Naive thymus-derived CD4-positive, alpha-beta T cell (primary cell): ENCODE measurements at regions of chr3 and their contacts with region 1.

Region 1: DNA sequence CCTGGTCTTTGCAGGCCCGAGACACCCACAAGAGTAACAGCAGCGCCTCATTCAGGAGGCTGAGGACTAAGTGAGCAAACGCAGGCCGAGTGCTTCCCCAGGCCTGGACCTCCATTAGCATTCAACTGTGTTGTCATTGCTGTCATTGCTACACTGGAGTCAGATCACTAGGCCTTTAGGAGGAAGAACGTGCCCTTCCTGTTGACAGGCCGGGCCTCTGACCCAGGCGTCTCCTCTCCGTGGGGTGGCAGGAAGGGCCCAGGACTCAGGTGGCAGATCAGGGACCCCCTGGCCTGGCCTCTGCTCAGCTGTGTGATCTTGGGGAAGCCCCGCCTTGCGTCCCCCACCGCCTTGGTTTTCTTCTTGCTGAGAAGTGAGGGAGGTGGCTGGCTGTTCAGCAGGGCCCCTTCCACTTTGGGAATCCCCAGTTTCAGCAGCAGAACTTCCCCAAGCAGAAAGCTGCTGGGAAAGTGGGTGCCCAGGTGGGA is 19.1 kb downstream of the ZDHHC19 start:
- DNase-seq: peak in 4 of 9 donors; percentile 27 to 57 (median 35)
- ATAC-seq: peak; percentile 64
- H3K4me3 ChIP-seq: no peak overlapping the region
- H3K4me3 Mint-ChIP-seq: peak overlapping the region in 7 of 10 donors; percentile 25 to 73 (median 49)
- H3K27ac ChIP-seq: peak overlapping the region; percentile 63
- H3K27ac Mint-ChIP-seq: peak overlapping the region; percentile 61 to 98 (median 87)
- H3K4me1 ChIP-seq: peaks cover 9 to 29% of the 10 kb centered on the region in 2 donors
- H3K4me1 Mint-ChIP-seq: peaks cover 14 to 41% (median 16%) of the 10 kb centered on the region in 7 donors
- H3K27me3 ChIP-seq: no peaks in the 10 kb centered on the region
- H3K27me3 Mint-ChIP-seq: no peaks in the 10 kb centered on the region

Region 2: GRCh38 chr3:195863121-195864006 is 328.7 kb before region 1 on chr3:
- CTCF ChIA-PET with region 1: no interaction called
- POLR2A ChIA-PET with region 1: no interaction called
- intact Hi-C with region 1: loop called (anchors 2 to 10 kb)
- DNase-seq: peak; percentile 29 to 73 (median 50)
- ATAC-seq: peak; percentile 91
- H3K4me3 ChIP-seq: no peak overlapping the region
- H3K4me3 Mint-ChIP-seq: no peak overlapping the region
- H3K27ac ChIP-seq: no peak overlapping the region
- H3K27ac Mint-ChIP-seq: peak overlapping the region in 2 of 9 donors; percentile 62 to 77
- H3K4me1 ChIP-seq: no peaks in the 10 kb centered on the region
- H3K4me1 Mint-ChIP-seq: peaks cover 3 to 15% (median 7%) of the 10 kb centered on the region in 7 donors
- H3K27me3 ChIP-seq: no peaks in the 10 kb centered on the region
- H3K27me3 Mint-ChIP-seq: no peaks in the 10 kb centered on the region

Region 3: GRCh38 chr3:196023947-196024346 is 168.1 kb before region 1 on chr3:
- CTCF ChIA-PET with region 1: no interaction called
- POLR2A ChIA-PET with region 1: no interaction called
- intact Hi-C with region 1: loop called in 1 of 2 experiments (anchors 2 kb)
- DNase-seq: no peak
- ATAC-seq: no peak
- H3K4me3 ChIP-seq: no peak overlapping the region
- H3K4me3 Mint-ChIP-seq: no peak overlapping the region
- H3K27ac ChIP-seq: no peak overlapping the region
- H3K27ac Mint-ChIP-seq: no peak overlapping the region
- H3K4me1 ChIP-seq: no peaks in the 10 kb centered on the region
- H3K4me1 Mint-ChIP-seq: no peaks in the 10 kb centered on the region
- H3K27me3 ChIP-seq: no peaks in the 10 kb centered on the region
- H3K27me3 Mint-ChIP-seq: peaks cover 0 to 19% (median 3%) of the 10 kb centered on the region in 5 donors

Region 4: DNA sequence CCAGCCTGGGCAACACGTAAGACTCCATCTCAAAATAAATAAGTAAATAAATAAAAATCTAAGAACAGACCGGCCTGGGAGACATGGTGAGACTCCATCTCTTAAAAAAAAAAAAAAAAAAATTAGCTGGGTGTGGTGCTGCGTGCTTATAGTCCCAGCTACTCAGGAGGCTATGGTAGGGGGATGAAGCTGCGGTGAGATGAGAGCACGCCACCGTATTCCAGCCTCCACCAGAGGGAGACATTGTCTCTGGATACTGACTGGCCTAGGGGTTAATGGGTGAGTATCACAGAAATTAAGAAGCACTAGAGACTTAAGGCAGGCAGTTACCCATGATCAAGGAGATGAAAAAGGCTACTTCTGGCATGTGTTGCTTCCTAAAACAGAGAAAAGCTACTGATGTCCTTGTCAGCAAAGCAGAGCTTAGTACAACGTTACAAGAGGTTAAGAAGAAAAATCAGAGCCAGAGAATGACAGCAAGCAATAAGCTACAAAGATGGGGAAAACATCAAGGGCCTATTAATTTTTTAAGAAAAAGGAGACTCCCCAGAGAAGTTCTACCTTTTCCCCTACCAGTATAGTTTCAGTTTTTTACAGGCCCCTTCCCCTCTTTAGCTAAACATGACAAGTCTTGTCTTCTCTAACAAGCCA is 118.8 kb before region 1 on chr3:
- CTCF ChIA-PET with region 1: interaction called, 209 read pairs
- POLR2A ChIA-PET with region 1: interaction called, 3 read pairs
- intact Hi-C with region 1: loop called (anchors 1 kb)
- DNase-seq: peak; percentile 33 to 81 (median 75)
- ATAC-seq: peak; percentile 100
- H3K4me3 ChIP-seq: no peak overlapping the region
- H3K4me3 Mint-ChIP-seq: peak overlapping the region in 1 of 10 donors; percentile 44
- H3K27ac ChIP-seq: no peak overlapping the region
- H3K27ac Mint-ChIP-seq: peak overlapping the region in 6 of 9 donors; percentile 4 to 82 (median 54)
- H3K4me1 ChIP-seq: peaks cover 7% of the 10 kb centered on the region in 2 donors
- H3K4me1 Mint-ChIP-seq: peaks cover 13 to 53% (median 18%) of the 10 kb centered on the region in 7 donors
- H3K27me3 ChIP-seq: no peaks in the 10 kb centered on the region
- H3K27me3 Mint-ChIP-seq: no peaks in the 10 kb centered on the region